Left ventricle myocardium inferior (tissue), 1 donor: ENCODE measurements at regions of chr5 and their contacts with region 1.

Region 1: DNA sequence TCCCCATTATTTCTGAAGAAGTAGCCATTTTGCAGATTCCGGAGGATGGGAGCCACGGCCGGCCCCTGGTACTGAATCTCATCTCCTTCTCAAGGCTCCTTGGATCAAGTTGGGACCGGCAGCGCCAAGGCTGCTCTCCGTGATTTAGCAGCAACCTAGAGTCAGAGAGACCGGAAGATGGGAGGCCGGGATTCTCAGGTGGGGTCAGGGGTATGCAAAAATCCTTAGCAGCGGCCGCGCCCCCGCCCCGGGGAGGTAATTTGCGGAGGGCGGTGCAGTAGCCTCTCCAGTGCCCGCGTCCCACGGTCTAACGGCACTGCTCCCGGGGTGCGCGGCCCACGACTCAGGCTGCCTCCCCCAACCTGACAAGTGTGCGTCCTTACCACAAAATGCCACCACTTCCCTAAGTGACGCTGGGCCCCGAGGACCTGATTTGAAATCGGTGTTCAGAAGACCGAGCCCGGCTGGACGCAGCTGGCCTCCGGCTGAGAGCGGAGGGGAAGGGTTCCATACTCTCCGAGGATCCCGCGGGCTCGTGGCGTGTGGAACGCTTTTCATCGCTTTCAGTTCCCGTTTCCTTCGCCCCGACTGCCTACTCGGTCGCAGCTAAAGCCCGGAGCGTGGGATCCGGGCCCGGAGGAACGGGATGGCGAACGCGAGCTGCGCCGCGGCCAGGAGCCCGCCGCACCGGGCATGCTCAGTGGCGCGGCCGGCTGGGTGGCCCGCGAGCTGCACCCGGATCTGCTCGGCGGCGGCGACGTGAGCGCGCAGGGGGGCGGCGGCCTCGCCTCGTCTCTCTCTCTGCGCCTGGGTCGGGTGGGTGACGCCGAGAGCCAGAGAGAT is at the start of gene SCAMP1:
- DNase-seq: peak; percentile 92
- H3K4me3 ChIP-seq: peak within 1 kb of the TSS; percentile 96
- H3K27ac ChIP-seq: peak within 1 kb of the TSS; percentile 95
- H3K4me1 ChIP-seq: peaks cover 40% of the 10 kb centered on the region
- H3K27me3 ChIP-seq: no peaks in the 10 kb centered on the region
- CTCF ChIP-seq: peak; percentile 72
- total RNA-seq, gene SCAMP1: 29.2 TPM

Region 2: DNA sequence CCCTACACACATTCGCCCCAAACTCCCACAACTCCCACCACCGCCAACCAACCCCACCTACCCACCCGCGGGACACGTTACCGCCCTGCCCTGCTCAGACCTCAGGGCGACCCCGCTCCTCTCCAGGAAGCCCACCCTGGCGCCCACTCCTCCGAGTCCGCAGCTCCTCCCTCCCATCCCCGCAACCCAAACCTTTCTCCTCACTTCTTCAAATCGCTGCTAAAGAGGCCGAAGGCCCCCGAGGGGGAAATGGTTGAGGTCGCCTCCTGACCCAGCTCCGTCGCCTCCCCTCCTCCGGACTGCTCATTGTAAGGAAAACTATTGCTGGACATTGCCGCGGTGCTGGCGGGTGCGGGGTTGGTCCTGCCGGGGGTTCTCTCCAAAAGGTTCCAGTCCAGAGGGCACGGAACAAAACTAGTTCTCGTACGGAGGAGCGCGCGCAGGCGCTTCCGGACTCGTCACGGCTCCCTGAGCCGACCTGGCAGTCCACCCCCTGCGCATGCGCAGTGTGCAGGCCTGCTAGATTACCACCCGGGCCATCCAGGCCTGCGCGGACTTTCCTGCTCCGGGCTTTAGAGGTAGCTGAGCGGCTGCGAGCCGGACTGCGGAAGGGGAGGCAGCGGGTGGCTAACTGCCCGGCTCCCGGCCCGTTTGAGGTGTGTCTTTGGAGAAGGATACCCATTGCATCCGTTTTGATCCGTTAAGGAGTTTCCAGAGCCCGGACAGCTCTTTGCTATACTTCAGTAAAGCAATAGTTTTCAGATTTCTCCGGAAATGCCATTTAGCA is 65.6 kb before region 1 on chr5 and contains the start of gene AP3B1:
- intact Hi-C with region 1: loop called (anchors 2 kb)
- DNase-seq: peak; percentile 100
- H3K4me3 ChIP-seq: peak within 1 kb of the TSS; percentile 87
- H3K27ac ChIP-seq: peak within 1 kb of the TSS; percentile 86
- H3K4me1 ChIP-seq: peaks cover 46% of the 10 kb centered on the region
- H3K27me3 ChIP-seq: no peaks in the 10 kb centered on the region
- CTCF ChIP-seq: no peak
- total RNA-seq, gene AP3B1: 22.0 TPM